Prostate gland (tissue), 2 donors: ENCODE measurements at regions of chr7 and their contacts with region 1.

Region 1: DNA sequence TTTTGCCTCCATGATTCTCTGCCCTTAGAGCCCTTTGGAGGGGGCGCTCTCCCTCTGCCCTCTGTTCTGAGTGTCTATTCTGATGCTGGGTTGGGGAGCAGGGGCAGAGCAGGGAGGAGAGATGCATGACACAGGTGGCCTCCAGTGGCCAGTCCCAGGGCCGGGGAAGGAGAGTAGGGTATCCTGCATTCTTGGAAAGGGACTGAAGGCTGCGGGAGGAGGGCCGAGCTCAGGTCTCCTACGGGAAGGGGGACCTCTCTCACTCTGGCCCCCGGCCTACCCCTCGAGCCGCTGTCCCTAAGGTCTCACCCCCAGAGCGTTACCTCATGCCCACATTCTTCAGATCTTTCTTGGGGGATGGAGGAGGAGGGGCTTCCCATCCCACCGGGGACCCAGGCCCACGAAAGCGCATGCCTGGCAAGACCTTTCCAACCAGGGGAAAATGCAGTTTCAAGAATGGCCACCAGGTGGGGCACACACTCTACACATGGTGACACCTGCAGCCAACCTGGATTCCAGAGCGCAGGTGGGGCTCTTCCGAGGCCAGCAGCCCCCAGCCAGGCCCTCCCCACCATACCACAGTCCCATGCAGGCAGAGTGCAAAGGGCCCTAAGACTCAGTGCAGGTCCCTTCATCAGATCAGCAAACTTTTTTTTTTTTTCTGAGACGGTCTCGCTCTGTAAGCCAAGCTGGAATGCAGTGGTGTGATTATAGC is 86.4 kb downstream of the MYL10 start:
- DNase-seq: peak; percentile 62
- H3K4me3 ChIP-seq: no peak overlapping the region
- H3K27ac ChIP-seq: no peak overlapping the region
- H3K4me1 ChIP-seq: no peaks in the 10 kb centered on the region
- H3K27me3 ChIP-seq: no peaks in the 10 kb centered on the region
- CTCF ChIP-seq: peak; percentile 88 to 93 (median 88)
- POLR2A ChIP-seq: no peak

Region 2: GRCh38 chr7:101066141-101066832 is 476.4 kb before region 1 on chr7:
- intact Hi-C with region 1: no loop called
- DNase-seq: no peak
- H3K4me3 ChIP-seq: no peak overlapping the region
- H3K27ac ChIP-seq: no peak overlapping the region
- H3K4me1 ChIP-seq: no peaks in the 10 kb centered on the region
- H3K27me3 ChIP-seq: peaks cover 1% of the 10 kb centered on the region
- CTCF ChIP-seq: no peak
- POLR2A ChIP-seq: no peak

Region 3: GRCh38 chr7:101121991-101122932 is 420.4 kb before region 1 on chr7:
- intact Hi-C with region 1: no loop called
- DNase-seq: no peak
- H3K4me3 ChIP-seq: peak overlapping the region in 1 of 2 donors; percentile 13
- H3K27ac ChIP-seq: peak overlapping the region; percentile 72 to 74
- H3K4me1 ChIP-seq: no peaks in the 10 kb centered on the region
- H3K27me3 ChIP-seq: no peaks in the 10 kb centered on the region
- CTCF ChIP-seq: no peak
- POLR2A ChIP-seq: no peak

Region 4: GRCh38 chr7:101321491-101322401 is 220.9 kb before region 1 on chr7 and contains the start of gene IFT22:
- intact Hi-C with region 1: loop called (anchors 2 kb)
- DNase-seq: peak; percentile 92
- H3K4me3 ChIP-seq: peak within 1 kb of the TSS; percentile 87 to 94
- H3K27ac ChIP-seq: peak within 1 kb of the TSS; percentile 83 to 85
- H3K4me1 ChIP-seq: no peaks in the 10 kb centered on the region
- H3K27me3 ChIP-seq: no peaks in the 10 kb centered on the region
- CTCF ChIP-seq: peak; percentile 11 to 49 (median 44)
- POLR2A ChIP-seq: no peak
- total RNA-seq, gene IFT22: 24.7 to 37.7 TPM

Region 5: DNA sequence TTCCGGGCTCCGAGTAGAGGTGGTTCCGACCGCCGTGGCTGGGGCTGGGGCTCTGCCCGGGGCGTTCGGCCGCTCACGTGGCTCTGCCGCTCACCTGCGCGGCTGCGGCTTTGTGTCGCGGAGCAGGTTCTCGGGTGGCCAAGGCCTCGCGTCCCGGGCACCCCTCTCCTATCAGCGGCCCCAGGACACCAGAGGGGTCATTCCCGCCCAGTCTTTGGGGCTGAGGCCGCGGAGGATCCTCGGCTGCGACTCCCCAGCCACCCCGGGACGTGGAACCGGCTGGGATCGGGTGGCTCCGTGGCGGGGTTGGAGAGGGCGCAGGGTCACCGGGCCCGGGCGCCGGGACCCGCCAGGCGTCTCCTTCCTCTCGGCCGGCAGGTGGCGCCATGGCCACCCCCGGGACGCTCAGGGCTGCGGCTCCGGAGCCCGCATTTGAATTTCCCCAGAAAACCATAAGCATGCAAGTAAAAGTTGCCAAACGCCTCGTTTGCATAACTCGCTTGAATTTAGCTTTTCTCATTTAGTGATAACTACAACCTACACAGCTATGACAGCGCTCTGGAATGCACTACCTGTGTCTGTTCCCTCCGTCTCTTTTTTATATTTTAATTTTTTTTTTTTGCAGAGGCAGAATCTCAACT is 178.8 kb before region 1 on chr7:
- intact Hi-C with region 1: loop called (anchors 2 kb)
- DNase-seq: peak; percentile 59
- H3K4me3 ChIP-seq: peak overlapping the region; percentile 39 to 56
- H3K27ac ChIP-seq: peak overlapping the region; percentile 67 to 71
- H3K4me1 ChIP-seq: no peaks in the 10 kb centered on the region
- H3K27me3 ChIP-seq: no peaks in the 10 kb centered on the region
- CTCF ChIP-seq: peak; percentile 83 to 93 (median 90)
- POLR2A ChIP-seq: no peak

Region 6: DNA sequence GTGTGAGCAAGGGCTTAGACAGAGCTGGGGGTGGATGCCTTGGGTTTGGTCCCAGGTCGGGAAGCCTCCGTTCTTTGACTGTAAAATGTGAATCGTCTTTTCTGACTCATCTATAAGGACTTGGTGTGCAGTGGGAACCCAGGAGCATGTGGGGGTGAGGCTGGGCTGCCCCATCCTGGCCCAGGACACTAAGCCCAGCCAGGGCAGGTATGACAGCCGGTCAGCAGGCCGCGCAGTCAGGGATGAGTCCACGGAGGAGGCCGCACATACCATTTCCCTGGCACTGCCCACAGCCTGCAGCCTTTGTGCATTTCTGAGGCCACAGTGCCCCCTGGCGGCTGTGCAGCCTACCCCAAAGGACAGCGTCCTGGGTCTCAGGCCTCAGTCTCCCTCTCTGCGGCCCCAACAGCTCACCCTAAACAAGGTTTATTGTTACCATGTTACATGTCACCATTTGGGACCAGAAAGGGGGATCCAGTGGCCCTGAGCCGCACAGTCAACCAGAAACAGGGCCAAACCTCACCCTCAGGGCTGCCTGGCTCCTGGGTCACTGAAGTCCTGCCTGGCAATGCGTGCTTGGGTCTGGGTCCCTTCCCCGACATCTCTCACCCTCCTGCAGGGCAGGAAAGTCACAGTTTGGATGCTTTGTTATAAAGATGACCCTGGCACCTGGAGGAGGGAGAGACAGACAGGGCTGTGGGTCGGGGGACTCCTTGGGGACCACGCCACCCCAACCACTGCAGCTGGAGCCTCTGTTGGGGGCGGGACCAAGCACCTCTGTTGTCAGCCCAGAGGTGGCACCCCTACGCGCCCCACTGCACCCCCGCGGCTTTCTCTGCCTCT is 729.6 kb after region 1 on chr7:
- intact Hi-C with region 1: loop called (anchors 2 kb)
- DNase-seq: peak; percentile 70
- H3K4me3 ChIP-seq: no peak overlapping the region
- H3K27ac ChIP-seq: no peak overlapping the region
- H3K4me1 ChIP-seq: no peaks in the 10 kb centered on the region
- H3K27me3 ChIP-seq: no peaks in the 10 kb centered on the region
- CTCF ChIP-seq: peak; percentile 81 to 95 (median 91)
- POLR2A ChIP-seq: no peak